ENCODE measurements at regions of chr10 and their contacts with region 1.

Region 1: DNA sequence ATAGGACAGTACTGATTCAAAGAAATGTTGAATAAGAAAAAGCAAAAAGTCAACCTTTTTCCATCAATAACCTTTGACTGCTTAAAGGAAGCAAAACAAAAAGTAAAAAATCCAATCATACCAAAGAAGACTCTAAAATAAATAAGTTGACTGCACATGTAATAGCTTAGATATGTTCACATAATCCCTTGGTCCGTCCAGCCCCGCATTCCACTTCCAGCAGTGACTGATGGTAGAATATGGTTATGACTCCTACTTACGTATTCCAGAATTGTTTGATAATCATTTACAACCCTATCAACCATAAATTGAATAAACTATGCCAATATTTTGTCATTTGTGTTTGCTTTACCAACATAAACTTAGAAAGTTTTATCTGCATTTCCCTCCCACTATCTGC is 77.9 kb downstream of the CTNNA3 start:
- DNase-seq: no peak
- ATAC-seq: no peak
- H3K4me3 ChIP-seq: no peak overlapping the region
- H3K27ac ChIP-seq: no peak overlapping the region
- H3K4me1 ChIP-seq: no peaks in the 10 kb centered on the region; the same call in 1 of the 2 replicates
- H3K27me3 ChIP-seq: no peaks in the 10 kb centered on the region
- CTCF ChIP-seq: no peak
- EP300 ChIP-seq: no peak
- POLR2A ChIP-seq: no peak
- RAD21 ChIP-seq: no peak

Region 2: DNA sequence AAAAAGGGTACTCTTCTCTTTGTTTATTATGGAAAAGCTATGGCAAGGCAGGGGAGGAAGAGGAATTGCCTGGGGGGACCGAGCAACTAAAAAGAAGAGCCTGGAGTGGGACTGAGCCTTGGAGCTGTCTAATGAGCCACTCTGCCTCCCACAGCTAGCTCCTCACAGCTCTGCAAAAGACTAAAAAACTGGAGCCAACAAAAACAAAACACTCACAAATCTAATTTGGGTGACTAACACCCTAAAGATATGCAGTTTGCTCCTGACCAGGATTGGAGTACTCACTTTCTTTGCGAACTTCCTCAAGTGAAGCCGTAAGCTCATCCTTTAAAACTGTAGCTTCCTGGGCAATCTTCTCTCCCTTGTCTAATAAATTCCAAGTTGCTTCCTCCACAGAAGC is 11.5 kb before region 1 on chr10:
- CTCF ChIA-PET with region 1: interaction called, 11 read pairs
- POLR2A ChIA-PET with region 1: no interaction called
- RAD21 ChIA-PET with region 1: interaction called, 4 read pairs
- SMC1A ChIA-PET with region 1: interaction called, 11 read pairs
- in situ Hi-C with region 1: no loop called
- intact Hi-C with region 1: no loop called
- DNase-seq: no peak
- ATAC-seq: no peak
- H3K4me3 ChIP-seq: no peak overlapping the region
- H3K27ac ChIP-seq: no peak overlapping the region
- H3K4me1 ChIP-seq: no peaks in the 10 kb centered on the region
- H3K27me3 ChIP-seq: no peaks in the 10 kb centered on the region
- CTCF ChIP-seq: no peak
- EP300 ChIP-seq: no peak
- POLR2A ChIP-seq: no peak
- RAD21 ChIP-seq: no peak

Region 3: DNA sequence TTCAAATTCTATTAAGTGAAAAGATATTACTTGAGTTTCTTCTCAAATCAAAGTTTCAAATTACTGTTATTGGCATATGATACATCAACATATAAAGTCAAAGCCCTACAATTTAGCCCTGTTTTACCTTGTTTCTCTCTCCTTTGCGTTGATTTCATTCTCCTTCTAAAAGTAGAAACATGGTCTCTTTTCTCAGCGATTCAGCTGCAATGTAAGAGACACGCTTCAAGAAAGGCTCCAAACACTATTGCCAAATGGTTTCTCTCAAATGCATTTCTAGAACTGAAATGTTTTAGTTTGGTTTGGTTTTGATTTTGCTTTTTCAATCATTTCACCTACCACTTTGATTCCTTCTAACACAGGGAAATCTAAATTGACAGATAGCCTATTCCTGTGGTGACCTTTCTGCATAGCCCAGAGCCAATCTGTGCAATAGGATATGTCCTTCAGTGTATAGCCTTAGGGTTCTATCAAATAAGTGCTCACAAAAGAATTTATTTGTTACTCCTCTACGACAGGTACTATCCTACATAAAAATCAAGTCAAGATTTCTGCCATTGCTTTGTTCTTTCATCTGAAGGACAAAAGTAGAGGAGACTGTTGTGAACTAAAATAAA is 30.6 kb after region 1 on chr10:
- CTCF ChIA-PET with region 1: no interaction called
- POLR2A ChIA-PET with region 1: no interaction called
- RAD21 ChIA-PET with region 1: no interaction called
- SMC1A ChIA-PET with region 1: no interaction called
- in situ Hi-C with region 1: no loop called
- intact Hi-C with region 1: no loop called
- DNase-seq: no peak
- ATAC-seq: no peak
- H3K4me3 ChIP-seq: no peak overlapping the region
- H3K27ac ChIP-seq: no peak overlapping the region
- H3K4me1 ChIP-seq: no peaks in the 10 kb centered on the region
- H3K27me3 ChIP-seq: 0 out of 4 replicates have a peak, but pooled peaks cover 0 to 2% of the 10 kb centered on the region in 2 experiments
- CTCF ChIP-seq: no peak
- EP300 ChIP-seq: no peak
- POLR2A ChIP-seq: no peak
- RAD21 ChIP-seq: no peak

Region 4: DNA sequence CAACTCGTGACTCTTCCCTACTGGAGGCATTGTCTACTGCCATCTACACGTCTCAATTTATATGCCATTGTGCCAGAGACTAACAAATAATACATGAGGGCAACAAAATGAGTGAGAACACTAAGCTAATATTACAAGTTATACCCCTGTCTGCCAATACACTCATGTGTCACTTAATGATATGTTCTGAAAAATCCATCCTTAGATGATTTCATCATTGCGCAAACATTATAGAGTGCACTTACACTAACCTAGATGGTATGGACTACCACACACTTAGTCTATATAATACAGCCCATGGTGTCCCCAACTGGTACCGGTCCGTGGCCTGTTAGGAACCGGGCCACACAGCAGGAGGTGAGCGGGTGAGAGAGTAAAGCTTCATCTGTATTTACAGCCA is 142.2 kb after region 1 on chr10:
- CTCF ChIA-PET with region 1: no interaction called
- POLR2A ChIA-PET with region 1: no interaction called
- RAD21 ChIA-PET with region 1: no interaction called
- SMC1A ChIA-PET with region 1: no interaction called
- in situ Hi-C with region 1: no loop called
- intact Hi-C with region 1: no loop called
- DNase-seq: no peak
- ATAC-seq: no peak
- H3K4me3 ChIP-seq: no peak overlapping the region
- H3K27ac ChIP-seq: no peak overlapping the region
- H3K4me1 ChIP-seq: no peaks in the 10 kb centered on the region
- H3K27me3 ChIP-seq: no peaks in the 10 kb centered on the region
- CTCF ChIP-seq: no peak
- EP300 ChIP-seq: no peak
- POLR2A ChIP-seq: no peak
- RAD21 ChIP-seq: no peak

Measured in GM12878 (cell line).